ENCODE measurements at regions of chr16 and their contacts with region 1.

Region 1: GRCh38 chr16:77190478-77191258 is at the start of gene MON1B:
- DNase-seq: peak; percentile 95 to 99 (median 96)
- ATAC-seq: peak; percentile 99
- H3K4me3 ChIP-seq: peak within 1 kb of the TSS; percentile 84
- H3K27ac ChIP-seq: peak within 1 kb of the TSS; percentile 99
- H3K4me1 ChIP-seq: peaks cover 9 to 17% of the 10 kb centered on the region in 2 experiments; a peak in 3 of 5 replicates
- H3K27me3 ChIP-seq: no peaks in the 10 kb centered on the region
- CTCF ChIP-seq: peak in 1 of 3 experiments; percentile 9; a peak in 1 of 6 replicates
- EP300 ChIP-seq: no peak
- POLR2A ChIP-seq: peak; percentile 90
- RAD21 ChIP-seq: no peak
- polyA plus RNA-seq, gene MON1B: 5.0 to 5.4 TPM

Region 2: DNA sequence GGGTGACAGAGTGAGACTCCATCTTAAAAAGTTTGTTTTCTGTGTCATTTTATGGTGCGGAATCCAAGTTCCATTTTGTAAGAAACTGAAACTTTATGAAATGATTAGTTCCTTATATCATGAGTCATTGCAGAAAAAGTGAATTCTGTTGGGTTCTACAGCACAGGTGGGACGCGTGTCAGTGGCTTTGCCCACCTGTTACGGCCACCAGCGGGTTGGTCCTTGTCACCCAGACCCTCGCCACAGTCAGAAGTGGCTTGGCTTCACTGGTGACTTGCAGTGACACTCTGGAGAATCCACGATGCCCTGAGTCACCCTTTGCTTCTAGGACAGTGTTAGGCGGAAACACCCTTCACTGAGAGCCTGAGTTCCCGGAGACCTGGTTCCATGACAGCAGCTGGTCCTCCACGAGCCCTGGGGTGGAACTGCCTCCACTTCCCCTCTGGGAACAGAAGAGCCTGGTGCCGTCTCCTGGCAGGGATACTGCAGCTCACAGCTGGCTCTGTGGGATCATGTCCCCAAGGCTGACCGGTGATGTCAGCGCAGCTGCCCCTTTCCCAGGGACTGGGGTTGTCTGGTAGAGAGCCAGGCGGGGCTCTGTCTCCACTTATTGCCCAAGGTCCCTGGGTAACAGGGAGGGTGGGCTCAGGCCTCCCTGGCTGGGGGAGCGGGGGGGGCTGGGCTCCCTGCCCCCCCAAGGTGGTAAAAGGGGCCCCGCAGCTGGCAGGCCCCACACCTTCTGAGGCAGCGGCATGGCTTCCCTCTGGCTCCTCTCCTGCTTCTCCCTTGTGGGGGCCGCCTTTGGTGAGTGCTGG is 1972.2 kb before region 1 on chr16 and contains the start of gene CTRB1:
- CTCF ChIA-PET with region 1: no interaction called
- POLR2A ChIA-PET with region 1: no interaction called
- in situ Hi-C with region 1: loop called (anchors 25 kb)
- intact Hi-C with region 1: no loop called
- DNase-seq: no peak
- ATAC-seq: peak; percentile 13; the same call in 2 of the 3 replicates
- H3K4me3 ChIP-seq: no peak within 1 kb of the TSS
- H3K27ac ChIP-seq: no peak within 1 kb of the TSS
- H3K4me1 ChIP-seq: peaks cover 0 to 11% of the 10 kb centered on the region in 2 experiments; a peak in 2 of 5 replicates
- H3K27me3 ChIP-seq: peaks cover 7% of the 10 kb centered on the region in 2 experiments; a peak in 3 of 5 replicates
- CTCF ChIP-seq: no peak
- EP300 ChIP-seq: no peak
- POLR2A ChIP-seq: no peak
- RAD21 ChIP-seq: no peak
- polyA plus RNA-seq, gene CTRB1: not detected

Measured in K562 (cell line).